ENCODE measurements at regions of chr11 and their contacts with region 1.

Region 1: DNA sequence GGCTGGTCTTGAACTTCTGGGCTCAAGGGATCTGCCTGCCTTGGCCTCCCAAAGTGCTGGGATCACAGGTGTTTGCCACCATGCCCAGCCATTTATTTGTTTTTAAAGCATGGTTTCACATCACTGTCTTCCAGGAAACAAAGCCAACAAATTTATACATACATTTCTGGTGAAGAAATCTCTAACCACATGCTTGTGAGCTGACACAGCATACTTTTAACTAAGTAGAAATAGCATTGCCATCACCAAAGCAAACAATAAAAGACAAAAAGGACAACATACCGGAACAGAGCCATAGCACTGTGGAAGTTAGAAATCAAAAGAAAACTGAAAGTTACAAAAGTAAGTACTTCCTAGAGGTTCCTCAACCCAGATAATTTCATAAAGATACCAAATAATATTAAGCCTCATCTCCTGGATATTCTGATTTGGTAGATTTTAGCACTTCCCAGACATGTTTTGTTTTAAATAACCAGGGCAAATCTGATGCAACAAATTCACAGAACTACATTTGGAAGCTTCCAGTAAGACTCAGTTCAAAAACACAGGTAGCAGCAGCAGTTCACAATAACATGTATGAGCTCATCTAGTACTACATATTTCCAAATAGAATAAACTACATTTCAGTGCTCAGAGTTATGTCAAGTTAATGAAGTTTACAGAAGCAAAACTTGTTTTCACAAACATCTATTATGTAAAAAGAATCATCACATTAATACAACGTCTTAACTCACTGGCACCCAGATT is 70.6 kb downstream of the RRAS2 start:
- DNase-seq: no peak
- CTCF ChIP-seq: no peak

Region 2: DNA sequence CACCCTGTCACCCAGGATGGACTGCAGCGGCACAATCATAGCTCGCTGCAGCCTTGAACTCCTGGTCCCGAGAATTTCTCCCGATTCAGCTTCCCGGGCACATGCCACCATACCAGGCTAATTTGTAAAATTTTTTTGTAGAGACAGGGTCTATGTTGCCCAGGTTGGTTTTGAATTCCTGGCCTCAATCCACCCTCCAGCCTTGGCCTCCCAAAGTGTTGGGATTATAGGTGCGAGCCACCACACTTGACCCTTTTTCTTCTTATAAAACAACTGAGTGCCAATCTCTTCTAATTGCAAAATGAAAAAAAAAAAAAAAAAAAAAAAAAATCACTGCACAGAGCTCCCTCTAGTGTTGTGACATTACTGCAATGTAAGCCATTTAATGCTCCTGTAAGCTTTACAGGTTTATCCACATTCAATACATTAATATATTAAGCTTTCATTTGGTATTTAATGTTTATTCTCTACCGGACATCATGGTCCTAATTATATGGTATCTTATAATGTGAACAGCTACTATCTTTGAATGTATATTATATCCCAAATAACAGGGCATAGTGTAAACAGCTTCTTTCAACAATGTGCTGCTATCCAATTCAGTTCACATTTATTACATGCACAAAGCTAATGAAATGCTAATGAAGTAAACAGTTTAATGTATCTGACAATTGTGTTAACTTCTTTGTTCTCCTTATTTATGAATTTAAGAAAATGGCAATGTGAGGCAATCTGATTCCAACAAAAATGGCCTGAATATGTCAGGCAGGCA is 166.7 kb after region 1 on chr11:
- in situ Hi-C with region 1: loop called (anchors 25 kb)
- DNase-seq: peak; percentile 24
- CTCF ChIP-seq: peak; percentile 60

Measured in GM13977 (cell line).